MCF 10A (cell line): ENCODE measurements at regions of chr1 and their contacts with region 1.

Region 1: GRCh38 chr1:214261206-214262123 is 19.5 kb upstream of the SMYD2 start:
- DNase-seq: peak; percentile 93
- H3K4me3 Mint-ChIP-seq: no peak overlapping the region
- H3K27ac Mint-ChIP-seq: no peak overlapping the region
- H3K4me1 Mint-ChIP-seq: peaks cover 12% of the 10 kb centered on the region
- H3K27me3 Mint-ChIP-seq: peaks cover 61% of the 10 kb centered on the region
- CTCF ChIP-seq: peak; percentile 100

Region 2: GRCh38 chr1:214102907-214103306 is 158.6 kb before region 1 on chr1:
- CTCF ChIA-PET with region 1: no interaction called
- POLR2A ChIA-PET with region 1: no interaction called
- intact Hi-C with region 1: no loop called
- DNase-seq: peak; percentile 86
- H3K4me3 Mint-ChIP-seq: no peak overlapping the region
- H3K27ac Mint-ChIP-seq: no peak overlapping the region
- H3K4me1 Mint-ChIP-seq: peaks cover 5% of the 10 kb centered on the region
- H3K27me3 Mint-ChIP-seq: no peaks in the 10 kb centered on the region
- CTCF ChIP-seq: no peak

Region 3: DNA sequence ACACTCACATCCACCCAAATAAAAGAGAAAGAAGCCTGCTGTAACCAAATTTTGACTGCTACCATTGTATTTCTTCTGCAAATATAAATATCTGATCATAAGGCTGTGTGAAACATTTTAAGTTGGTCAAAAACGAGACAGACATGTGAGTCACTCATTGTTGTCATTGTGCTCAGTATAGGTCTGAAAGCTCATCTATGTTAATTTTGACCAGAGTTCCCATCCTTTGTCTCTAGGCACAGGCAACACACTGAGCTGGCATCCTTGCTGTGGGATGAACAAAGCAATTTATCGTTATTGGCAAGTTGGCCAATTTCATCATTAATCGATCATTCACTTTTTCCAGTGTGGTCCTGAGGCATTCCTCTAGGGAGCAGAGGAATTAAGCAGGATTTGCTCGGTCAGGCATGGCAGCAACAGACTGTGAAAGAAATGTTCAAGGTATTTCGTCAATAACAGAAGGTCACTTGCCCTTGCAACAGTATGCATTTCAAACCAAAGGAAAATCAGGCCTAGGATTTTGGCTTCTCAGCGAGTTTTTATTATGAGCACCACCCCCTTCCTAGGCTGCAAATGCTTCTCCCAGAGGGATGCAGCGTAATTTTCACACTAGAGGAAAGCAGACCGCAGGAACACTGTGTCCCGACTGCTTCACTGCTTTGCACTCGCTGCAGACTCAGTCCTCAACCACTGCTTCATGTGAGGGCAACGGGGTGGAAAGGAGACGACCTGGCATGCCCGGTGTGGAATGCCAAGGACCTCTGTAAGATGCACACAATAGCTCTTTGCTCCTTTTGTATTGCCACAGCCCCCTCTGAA is 68.4 kb before region 1 on chr1:
- CTCF ChIA-PET with region 1: interaction called, 12 read pairs
- POLR2A ChIA-PET with region 1: no interaction called
- intact Hi-C with region 1: no loop called
- DNase-seq: no peak
- H3K4me3 Mint-ChIP-seq: no peak overlapping the region
- H3K27ac Mint-ChIP-seq: no peak overlapping the region
- H3K4me1 Mint-ChIP-seq: no peaks in the 10 kb centered on the region
- H3K27me3 Mint-ChIP-seq: peaks cover 75% of the 10 kb centered on the region
- CTCF ChIP-seq: no peak

Region 4: GRCh38 chr1:214234635-214235025 is 26.8 kb before region 1 on chr1:
- CTCF ChIA-PET with region 1: interaction called, 59 read pairs
- POLR2A ChIA-PET with region 1: no interaction called
- intact Hi-C with region 1: no loop called
- DNase-seq: no peak
- H3K4me3 Mint-ChIP-seq: no peak overlapping the region
- H3K27ac Mint-ChIP-seq: no peak overlapping the region
- H3K4me1 Mint-ChIP-seq: no peaks in the 10 kb centered on the region
- H3K27me3 Mint-ChIP-seq: peaks cover 45% of the 10 kb centered on the region
- CTCF ChIP-seq: no peak

Region 5: DNA sequence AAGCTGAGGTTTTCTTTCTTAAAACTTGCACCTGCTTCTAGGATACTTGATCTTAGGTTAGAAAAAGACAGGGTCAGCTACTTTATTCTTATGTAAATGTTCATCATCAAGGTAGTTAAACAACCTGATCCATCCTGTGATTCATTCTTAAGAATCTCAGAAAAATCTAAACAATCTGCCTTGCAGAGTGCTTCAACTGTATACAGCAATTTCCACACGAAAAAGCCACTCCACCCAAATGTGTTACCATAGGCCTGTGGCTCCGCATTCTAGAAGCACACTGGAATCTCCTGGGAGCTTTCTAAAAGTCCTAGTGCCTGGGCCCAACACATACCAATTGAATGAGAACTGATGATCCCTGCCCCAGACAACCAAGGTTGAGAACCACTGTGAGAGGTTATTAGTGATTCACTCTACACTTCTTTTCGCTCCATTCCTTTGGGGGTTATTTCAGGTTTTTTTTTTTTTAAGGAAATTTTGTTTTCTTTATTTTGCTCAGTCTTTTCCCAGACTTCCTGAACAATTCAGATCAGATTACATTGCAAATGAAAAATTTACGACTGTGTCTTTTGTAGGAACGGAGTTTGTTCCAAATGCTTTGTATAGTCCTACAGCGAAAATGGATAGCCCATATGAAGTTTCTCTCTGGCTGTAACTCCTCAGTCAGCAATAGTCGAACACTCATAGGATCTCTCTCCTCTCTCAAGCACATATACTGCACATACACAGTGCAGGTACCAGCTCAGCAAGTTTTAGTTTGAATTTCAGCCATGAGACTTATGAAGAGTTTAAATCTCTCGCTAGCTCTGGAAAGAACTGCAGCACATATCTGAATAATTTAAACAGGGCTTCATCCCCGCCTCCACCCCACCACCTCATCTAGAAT is 35.6 kb after region 1 on chr1:
- CTCF ChIA-PET with region 1: interaction called, 96 read pairs
- POLR2A ChIA-PET with region 1: interaction called, 4 read pairs
- intact Hi-C with region 1: no loop called
- DNase-seq: peak; percentile 24
- H3K4me3 Mint-ChIP-seq: no peak overlapping the region
- H3K27ac Mint-ChIP-seq: peak overlapping the region; percentile 10
- H3K4me1 Mint-ChIP-seq: peaks cover 23% of the 10 kb centered on the region
- H3K27me3 Mint-ChIP-seq: no peaks in the 10 kb centered on the region
- CTCF ChIP-seq: no peak

Region 6: DNA sequence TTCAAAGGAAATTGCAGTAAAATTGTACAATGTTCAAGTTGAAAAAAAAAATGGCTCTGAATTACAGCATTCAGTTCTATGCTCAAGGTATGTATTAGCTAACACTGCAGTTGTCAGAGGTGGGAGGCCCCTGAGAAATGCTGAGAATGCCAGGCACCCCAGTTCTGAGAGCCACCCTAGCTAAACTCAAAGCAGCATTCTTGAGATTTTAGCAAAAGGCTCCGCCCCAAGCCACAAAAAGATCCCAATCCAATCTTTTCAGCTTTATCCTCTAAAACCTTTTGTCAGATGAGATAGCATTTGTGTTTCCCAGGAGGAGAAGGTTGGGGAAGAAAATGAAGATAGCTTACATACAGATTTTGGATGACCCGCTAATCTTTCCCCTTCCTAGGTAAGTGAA is 88.3 kb after region 1 on chr1:
- CTCF ChIA-PET with region 1: interaction called, 24 read pairs
- POLR2A ChIA-PET with region 1: no interaction called
- intact Hi-C with region 1: no loop called
- DNase-seq: no peak
- H3K4me3 Mint-ChIP-seq: no peak overlapping the region
- H3K27ac Mint-ChIP-seq: peak overlapping the region; percentile 23
- H3K4me1 Mint-ChIP-seq: no peaks in the 10 kb centered on the region
- H3K27me3 Mint-ChIP-seq: no peaks in the 10 kb centered on the region
- CTCF ChIP-seq: no peak

Region 7: GRCh38 chr1:214590696-214591095 is 329.2 kb after region 1 on chr1:
- CTCF ChIA-PET with region 1: interaction called, 85 read pairs
- POLR2A ChIA-PET with region 1: no interaction called
- intact Hi-C with region 1: loop called (anchors 1 kb)
- DNase-seq: no peak
- H3K4me3 Mint-ChIP-seq: no peak overlapping the region
- H3K27ac Mint-ChIP-seq: no peak overlapping the region
- H3K4me1 Mint-ChIP-seq: no peaks in the 10 kb centered on the region
- H3K27me3 Mint-ChIP-seq: no peaks in the 10 kb centered on the region
- CTCF ChIP-seq: peak; percentile 33

Region 8: GRCh38 chr1:214637722-214638458 is 376.4 kb after region 1 on chr1:
- CTCF ChIA-PET with region 1: interaction called, 51 read pairs
- POLR2A ChIA-PET with region 1: no interaction called
- intact Hi-C with region 1: no loop called
- DNase-seq: peak; percentile 71
- H3K4me3 Mint-ChIP-seq: no peak overlapping the region
- H3K27ac Mint-ChIP-seq: peak overlapping the region; percentile 22
- H3K4me1 Mint-ChIP-seq: no peaks in the 10 kb centered on the region
- H3K27me3 Mint-ChIP-seq: no peaks in the 10 kb centered on the region
- CTCF ChIP-seq: peak; percentile 87